ENCODE measurements at regions of chr3 and their contacts with region 1.

Region 1: GRCh38 chr3:31550452-31551251 is 17.9 kb downstream of the STT3B start:
- DNase-seq: no peak
- ATAC-seq: peak in 3 of 4 donors; percentile 51 to 63 (median 54)
- H3K4me3 ChIP-seq: no peak overlapping the region
- H3K27ac ChIP-seq: no peak overlapping the region
- H3K4me1 ChIP-seq: peaks cover 0 to 66% (median 46%) of the 10 kb centered on the region in 12 donors
- H3K27me3 ChIP-seq: no peaks in the 10 kb centered on the region
- CTCF ChIP-seq: peak; percentile 45 to 78 (median 68)
- POLR2A ChIP-seq: no peak

Region 2: GRCh38 chr3:31495971-31496665 is 54.5 kb before region 1 on chr3:
- intact Hi-C with region 1: no loop called
- DNase-seq: no peak
- ATAC-seq: no peak
- H3K4me3 ChIP-seq: no peak overlapping the region
- H3K27ac ChIP-seq: no peak overlapping the region
- H3K4me1 ChIP-seq: no peaks in the 10 kb centered on the region
- H3K27me3 ChIP-seq: no peaks in the 10 kb centered on the region
- CTCF ChIP-seq: no peak
- POLR2A ChIP-seq: no peak

Region 3: DNA sequence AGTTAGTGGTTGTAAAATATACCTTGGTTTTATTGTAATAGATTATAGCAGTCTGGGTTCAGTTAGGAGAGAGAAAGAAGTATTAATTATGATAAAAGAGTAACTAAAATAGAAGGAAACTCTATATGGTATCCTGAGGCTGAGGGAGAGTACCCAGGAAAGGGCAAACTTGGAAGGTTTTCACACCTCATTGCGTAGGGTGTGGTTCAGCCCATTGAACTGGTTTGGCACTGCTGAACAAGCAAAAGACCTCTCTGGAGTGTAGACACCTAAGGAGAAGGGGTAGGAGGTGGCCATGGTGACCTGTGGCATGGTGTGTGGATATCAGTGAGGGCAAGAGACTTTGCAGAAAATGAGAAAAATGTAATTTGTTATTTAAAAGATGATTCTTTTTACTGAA is 45.5 kb after region 1 on chr3:
- intact Hi-C with region 1: no loop called
- DNase-seq: no peak
- ATAC-seq: no peak
- H3K4me3 ChIP-seq: no peak overlapping the region
- H3K27ac ChIP-seq: no peak overlapping the region
- H3K4me1 ChIP-seq: peaks cover 0 to 20% (median 2%) of the 10 kb centered on the region in 12 donors
- H3K27me3 ChIP-seq: no peaks in the 10 kb centered on the region
- CTCF ChIP-seq: no peak
- POLR2A ChIP-seq: no peak

Region 4: DNA sequence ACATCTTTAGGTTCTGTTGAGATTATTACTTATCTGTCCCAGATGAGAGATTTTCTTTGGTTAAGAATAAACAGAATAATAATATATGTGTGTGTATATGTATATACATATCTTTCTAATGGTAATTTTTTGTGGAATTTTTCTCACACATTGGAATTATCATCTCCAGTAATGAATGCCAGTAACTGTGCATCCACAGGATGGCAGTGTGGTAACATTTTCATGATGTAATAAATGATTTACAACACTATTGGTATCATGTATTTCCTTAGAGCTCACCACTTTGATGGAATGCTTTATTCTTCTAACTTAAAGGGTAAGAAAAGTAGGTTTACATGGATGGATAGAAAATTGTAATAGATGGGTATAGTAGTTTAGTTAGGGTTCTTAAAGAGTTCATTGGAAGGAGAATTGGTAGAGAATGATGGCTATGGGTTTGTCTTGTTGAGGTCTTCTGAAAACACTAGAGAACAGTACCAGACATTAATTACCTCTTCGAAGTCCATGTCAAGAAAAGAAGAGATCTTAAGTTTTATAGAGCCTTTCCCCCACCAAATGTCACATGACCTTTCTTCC is 60.1 kb after region 1 on chr3:
- intact Hi-C with region 1: loop called in 1 of 10 experiments (anchors 5 kb)
- DNase-seq: no peak
- ATAC-seq: peak in 1 of 4 donors; percentile 42
- H3K4me3 ChIP-seq: no peak overlapping the region
- H3K27ac ChIP-seq: no peak overlapping the region
- H3K4me1 ChIP-seq: peaks cover 0 to 6% (median 0%) of the 10 kb centered on the region in 12 donors
- H3K27me3 ChIP-seq: no peaks in the 10 kb centered on the region
- CTCF ChIP-seq: peak; percentile 34 to 70 (median 50)
- POLR2A ChIP-seq: no peak